A673 (cell line): ENCODE measurements at regions of chr14 and their contacts with region 1.

Region 1: GRCh38 chr14:35438910-35439713 is 34.6 kb upstream of the NFKBIA start:
- DNase-seq: peak; percentile 37
- H3K4me3 ChIP-seq: no peak overlapping the region
- H3K27ac ChIP-seq: no peak overlapping the region
- H3K4me1 ChIP-seq: no peaks in the 10 kb centered on the region
- H3K27me3 ChIP-seq: no peaks in the 10 kb centered on the region
- CTCF ChIP-seq: peak; percentile 71

Region 2: DNA sequence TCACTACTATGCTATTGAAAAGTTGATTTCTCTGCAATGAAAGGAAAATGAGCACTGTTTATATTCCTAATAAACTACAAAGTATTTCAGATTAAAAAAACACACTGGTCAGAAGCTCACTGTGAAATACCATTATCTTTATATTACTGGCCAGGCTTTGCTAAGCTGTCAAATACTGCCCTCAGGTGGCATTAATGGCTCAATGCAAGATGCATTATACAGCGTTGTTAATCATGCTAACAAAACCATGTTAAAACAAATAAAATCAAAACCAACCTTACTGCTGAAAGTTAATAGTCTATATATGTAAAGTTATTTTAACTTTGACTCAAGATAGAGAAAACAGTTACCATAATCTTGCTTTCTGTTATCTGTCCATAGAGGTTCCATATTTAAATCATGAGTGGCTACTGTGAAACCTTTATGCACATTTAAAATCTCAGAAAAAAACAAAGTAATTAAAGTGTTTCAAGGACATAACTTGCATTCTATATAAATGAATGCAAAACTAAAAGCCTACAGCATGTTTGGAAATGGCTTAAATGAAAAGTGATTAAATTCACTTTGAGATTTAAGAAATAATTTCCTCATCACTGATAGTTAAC is 248.3 kb after region 1 on chr14:
- CTCF ChIA-PET with region 1: interaction called, 16 read pairs
- POLR2A ChIA-PET with region 1: no interaction called
- intact Hi-C with region 1: loop called (anchors 2 kb)
- DNase-seq: peak; percentile 70
- H3K4me3 ChIP-seq: no peak overlapping the region
- H3K27ac ChIP-seq: no peak overlapping the region
- H3K4me1 ChIP-seq: peaks cover under 1% of the 10 kb centered on the region
- H3K27me3 ChIP-seq: no peaks in the 10 kb centered on the region
- CTCF ChIP-seq: peak; percentile 92